ENCODE measurements at regions of chr11 and their contacts with region 1.

Region 1: GRCh38 chr11:65027213-65028067 is at the start of gene SNX15:
- DNase-seq: peak; percentile 94 to 96 (median 95)
- H3K4me3 ChIP-seq: peak within 1 kb of the TSS in 1 of 2 donors; percentile 52
- H3K4me3 Mint-ChIP-seq: peak within 1 kb of the TSS; percentile 69 to 88 (median 81)
- H3K27ac ChIP-seq: peak within 1 kb of the TSS; percentile 61
- H3K27ac Mint-ChIP-seq: peak within 1 kb of the TSS; percentile 88 to 96 (median 91)
- H3K4me1 ChIP-seq: peaks cover 19% of the 10 kb centered on the region
- H3K4me1 Mint-ChIP-seq: peaks cover 9 to 30% (median 17%) of the 10 kb centered on the region in 4 donors
- H3K27me3 ChIP-seq: no peaks in the 10 kb centered on the region
- H3K27me3 Mint-ChIP-seq: no peaks in the 10 kb centered on the region
- total RNA-seq, gene SNX15: 24.5 to 26.7 TPM

Region 2: GRCh38 chr11:64916775-64917662 is 110.4 kb before region 1 on chr11 and contains the start of gene ATG2A:
- CTCF ChIA-PET with region 1: interaction called, 3 read pairs
- POLR2A ChIA-PET with region 1: no interaction called
- intact Hi-C with region 1: loop called (anchors 1 kb)
- DNase-seq: peak; percentile 98 to 99 (median 99)
- H3K4me3 ChIP-seq: peak within 1 kb of the TSS; percentile 94 to 97
- H3K4me3 Mint-ChIP-seq: peak within 1 kb of the TSS; percentile 91 to 96 (median 93)
- H3K27ac ChIP-seq: peak within 1 kb of the TSS; percentile 88
- H3K27ac Mint-ChIP-seq: peak within 1 kb of the TSS; percentile 93 to 97 (median 96)
- H3K4me1 ChIP-seq: peaks cover 27% of the 10 kb centered on the region
- H3K4me1 Mint-ChIP-seq: peaks cover 15 to 28% (median 23%) of the 10 kb centered on the region in 4 donors
- H3K27me3 ChIP-seq: no peaks in the 10 kb centered on the region
- H3K27me3 Mint-ChIP-seq: no peaks in the 10 kb centered on the region
- total RNA-seq, gene ATG2A: 45.7 to 47.3 TPM

Region 3: GRCh38 chr11:64924102-64924851 is 103.2 kb before region 1 on chr11 and contains the start of gene PPP2R5B:
- CTCF ChIA-PET with region 1: no interaction called
- POLR2A ChIA-PET with region 1: interaction called, 5 read pairs
- intact Hi-C with region 1: loop called (anchors 1 kb)
- DNase-seq: peak; percentile 87 to 95 (median 90)
- H3K4me3 ChIP-seq: peak within 1 kb of the TSS; percentile 61 to 85
- H3K4me3 Mint-ChIP-seq: peak within 1 kb of the TSS; percentile 93 to 99 (median 96)
- H3K27ac ChIP-seq: peak within 1 kb of the TSS; percentile 78
- H3K27ac Mint-ChIP-seq: peak within 1 kb of the TSS; percentile 98 to 100 (median 99)
- H3K4me1 ChIP-seq: peaks cover 20% of the 10 kb centered on the region
- H3K4me1 Mint-ChIP-seq: peaks cover 9 to 15% (median 11%) of the 10 kb centered on the region in 4 donors
- H3K27me3 ChIP-seq: no peaks in the 10 kb centered on the region
- H3K27me3 Mint-ChIP-seq: no peaks in the 10 kb centered on the region
- total RNA-seq, gene PPP2R5B: 14.0 to 15.8 TPM

Region 4: GRCh38 chr11:64947208-64947814 is 80.1 kb before region 1 on chr11:
- CTCF ChIA-PET with region 1: no interaction called
- POLR2A ChIA-PET with region 1: no interaction called
- intact Hi-C with region 1: no loop called
- DNase-seq: no peak
- H3K4me3 ChIP-seq: no peak overlapping the region
- H3K4me3 Mint-ChIP-seq: no peak overlapping the region
- H3K27ac ChIP-seq: no peak overlapping the region
- H3K27ac Mint-ChIP-seq: no peak overlapping the region
- H3K4me1 ChIP-seq: no peaks in the 10 kb centered on the region
- H3K4me1 Mint-ChIP-seq: no peaks in the 10 kb centered on the region
- H3K27me3 ChIP-seq: no peaks in the 10 kb centered on the region
- H3K27me3 Mint-ChIP-seq: peaks cover 0 to 11% of the 10 kb centered on the region in 2 donors

Region 5: DNA sequence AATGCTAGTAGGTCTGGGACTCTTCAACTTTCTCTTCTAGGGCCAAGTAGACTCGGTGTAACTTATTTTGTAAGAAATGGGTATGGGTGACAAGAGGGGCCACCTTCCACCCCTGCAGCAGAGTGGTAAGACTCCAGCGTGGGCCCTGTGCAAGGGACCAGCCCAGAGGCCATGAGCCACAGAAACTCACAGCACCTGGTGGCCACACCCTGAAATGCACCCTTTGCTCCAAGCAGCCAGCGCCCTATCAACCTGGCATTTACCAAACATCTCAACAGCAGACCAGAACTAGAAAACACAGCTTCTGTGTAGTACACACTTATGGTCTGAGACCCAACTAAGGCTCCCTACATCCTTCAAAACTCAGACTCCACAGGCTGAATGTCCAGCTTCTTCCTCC is 50.7 kb after region 1 on chr11:
- CTCF ChIA-PET with region 1: interaction called, 3 read pairs
- POLR2A ChIA-PET with region 1: no interaction called
- intact Hi-C with region 1: loop called (anchors 1 kb)
- DNase-seq: peak; percentile 71 to 75 (median 72)
- H3K4me3 ChIP-seq: no peak overlapping the region
- H3K4me3 Mint-ChIP-seq: peak overlapping the region in 2 of 8 donors; percentile 9 to 30
- H3K27ac ChIP-seq: peak overlapping the region; percentile 35
- H3K27ac Mint-ChIP-seq: peak overlapping the region; percentile 42 to 93 (median 81)
- H3K4me1 ChIP-seq: peaks cover 18% of the 10 kb centered on the region
- H3K4me1 Mint-ChIP-seq: peaks cover 4 to 22% (median 12%) of the 10 kb centered on the region in 4 donors
- H3K27me3 ChIP-seq: no peaks in the 10 kb centered on the region
- H3K27me3 Mint-ChIP-seq: no peaks in the 10 kb centered on the region

Region 6: GRCh38 chr11:65083834-65084597 is 56.6 kb after region 1 on chr11 and contains the starts of genes CDCA5 and ZFPL1:
- CTCF ChIA-PET with region 1: interaction called, 3 read pairs
- POLR2A ChIA-PET with region 1: no interaction called
- intact Hi-C with region 1: loop called (anchors 1 kb)
- DNase-seq: peak; percentile 94 to 98 (median 97)
- H3K4me3 ChIP-seq: peak within 1 kb of the TSS; percentile 74 to 75
- H3K4me3 Mint-ChIP-seq: peak within 1 kb of the TSS; percentile 92 to 96 (median 94)
- H3K27ac ChIP-seq: peak within 1 kb of the TSS; percentile 94
- H3K27ac Mint-ChIP-seq: peak within 1 kb of the TSS; percentile 97 to 99 (median 98)
- H3K4me1 ChIP-seq: peaks cover 25% of the 10 kb centered on the region
- H3K4me1 Mint-ChIP-seq: peaks cover 9 to 42% (median 26%) of the 10 kb centered on the region in 4 donors
- H3K27me3 ChIP-seq: no peaks in the 10 kb centered on the region
- H3K27me3 Mint-ChIP-seq: no peaks in the 10 kb centered on the region
- total RNA-seq, gene CDCA5: 0.41 to 0.64 TPM
- total RNA-seq, gene ZFPL1: 48.6 to 51.9 TPM